ENCODE measurements at regions of chr12 and their contacts with region 1.

Region 1: GRCh38 chr12:3299929-3300832 is 190.8 kb upstream of the PRMT8 start:
- DNase-seq: peak; percentile 83 to 93 (median 90)
- H3K4me3 ChIP-seq: peak overlapping the region in 23 of 59 donors; percentile 0 to 44 (median 20)
- H3K27ac ChIP-seq: peak overlapping the region in 5 of 59 donors; percentile 8 to 58 (median 48)
- H3K27me3 ChIP-seq: peaks cover 0 to 19% (median 0%) of the 10 kb centered on the region in 45 donors
- CTCF ChIP-seq: peak; percentile 64 to 98 (median 90)

Region 2: DNA sequence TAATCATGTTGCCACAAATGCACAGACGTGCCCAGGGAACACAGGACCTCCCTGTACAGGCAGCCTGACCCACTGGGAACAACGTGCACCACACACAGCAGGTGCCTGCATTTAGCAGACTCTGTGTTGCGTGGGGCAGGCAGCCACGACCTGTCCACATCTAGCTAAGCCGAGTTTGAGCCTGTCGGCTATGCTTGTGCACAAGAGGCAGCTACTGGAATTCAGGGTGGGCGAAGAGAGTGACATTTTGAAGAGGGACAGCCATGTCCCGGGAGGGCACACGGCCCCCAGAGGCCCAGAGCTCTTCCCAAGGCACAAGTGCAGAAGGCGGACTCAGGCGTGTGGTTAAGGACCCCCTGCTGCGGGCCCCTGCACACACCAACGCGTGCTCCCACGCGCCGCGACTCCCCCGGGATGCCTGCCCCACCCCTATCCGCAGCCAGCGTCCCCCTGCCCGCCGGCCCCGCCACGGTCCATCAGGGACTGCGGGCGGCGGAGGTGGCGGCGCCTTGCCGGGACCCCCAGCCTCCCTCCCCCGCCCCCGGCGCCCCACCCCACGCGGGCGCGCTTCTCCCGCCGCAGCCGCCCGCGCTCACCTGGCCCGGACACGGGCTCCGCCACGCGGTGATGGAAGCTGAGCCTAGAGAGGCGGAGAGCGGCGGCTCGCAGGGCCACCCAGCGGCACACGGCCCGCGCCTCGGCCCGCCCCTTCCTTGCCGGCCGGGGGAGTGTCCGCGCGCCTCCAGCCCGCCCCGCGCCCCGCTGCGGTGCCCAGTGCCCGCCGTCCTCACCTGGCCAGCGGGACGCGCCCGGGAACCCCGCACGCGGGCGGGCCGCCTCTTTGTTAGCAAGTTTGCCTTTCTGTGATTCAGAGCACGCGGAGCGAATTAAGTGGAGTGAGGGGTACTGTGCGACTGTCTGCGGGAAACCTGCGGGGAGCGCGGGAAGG is 65.6 kb after region 1 on chr12:
- intact Hi-C with region 1: loop called in 1 of 2 experiments (anchors 5 kb)
- DNase-seq: peak in 3 of 10 donors; percentile 24 to 70 (median 49)
- H3K4me3 ChIP-seq: peak overlapping the region; percentile 31 to 73 (median 59)
- H3K27ac ChIP-seq: peak overlapping the region in 19 of 59 donors; percentile 9 to 75 (median 45)
- H3K27me3 ChIP-seq: peaks cover 0 to 16% (median 0%) of the 10 kb centered on the region in 45 donors
- CTCF ChIP-seq: peak in 20 of 56 donors; percentile 5 to 54 (median 24)

Region 3: GRCh38 chr12:3641428-3642018 is 341.3 kb after region 1 on chr12:
- intact Hi-C with region 1: loop called (anchors 5 to 10 kb)
- DNase-seq: no peak
- H3K4me3 ChIP-seq: no peak overlapping the region
- H3K27ac ChIP-seq: no peak overlapping the region
- H3K27me3 ChIP-seq: no peaks in the 10 kb centered on the region
- CTCF ChIP-seq: no peak

Region 4: GRCh38 chr12:3777206-3777809 is 477.1 kb after region 1 on chr12:
- intact Hi-C with region 1: loop called (anchors 1 to 2 kb)
- DNase-seq: peak in 1 of 10 donors; percentile 35
- H3K4me3 ChIP-seq: no peak overlapping the region
- H3K27ac ChIP-seq: no peak overlapping the region
- H3K27me3 ChIP-seq: no peaks in the 10 kb centered on the region
- CTCF ChIP-seq: peak; percentile 47 to 81 (median 68)

Region 5: DNA sequence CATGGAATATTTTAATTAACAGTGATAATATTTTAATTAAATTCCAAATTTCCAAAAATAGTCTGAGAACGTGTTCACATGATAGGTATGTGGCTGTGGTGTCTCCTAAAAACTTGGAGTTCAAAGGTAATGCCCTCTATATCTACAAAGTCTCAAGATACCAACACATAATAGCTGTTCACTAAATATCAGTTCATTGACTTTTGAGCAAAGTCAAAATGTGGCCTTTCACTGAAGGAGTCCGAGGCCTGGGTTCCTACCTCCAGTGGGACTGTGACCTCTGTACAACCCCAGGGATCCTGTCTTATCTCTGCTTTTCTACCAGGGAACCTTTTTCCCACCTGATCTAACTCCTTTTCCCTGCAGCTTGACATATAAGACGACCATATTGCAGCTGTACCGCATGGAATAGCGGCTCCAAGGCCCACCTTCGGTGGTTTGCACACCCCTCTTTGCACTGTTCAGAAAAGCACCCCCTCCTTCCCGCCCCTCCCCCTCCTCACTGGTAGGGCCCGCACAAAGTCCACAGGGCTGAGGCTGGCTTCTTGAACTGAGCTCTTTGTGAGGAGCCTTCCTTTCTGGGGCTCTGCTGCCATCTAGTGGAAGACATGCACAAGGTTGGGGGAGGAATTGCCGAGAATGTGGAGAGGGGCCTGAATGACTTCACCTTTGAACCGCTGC is 976.5 kb after region 1 on chr12:
- intact Hi-C with region 1: loop called in 1 of 2 experiments (anchors 5 kb)
- DNase-seq: peak in 9 of 10 donors; percentile 67 to 82 (median 78)
- H3K4me3 ChIP-seq: peak overlapping the region in 54 of 59 donors; percentile 12 to 89 (median 76)
- H3K27ac ChIP-seq: peak overlapping the region in 23 of 59 donors; percentile 13 to 95 (median 91)
- H3K27me3 ChIP-seq: peaks cover 0 to 55% (median 6%) of the 10 kb centered on the region in 45 donors
- CTCF ChIP-seq: peak; percentile 72 to 94 (median 87)

Measured in dorsolateral prefrontal cortex (tissue), 120 donors.